CD4-positive, alpha-beta T cell (primary cell): ENCODE measurements at regions of chr12 and their contacts with region 1.

Region 1: DNA sequence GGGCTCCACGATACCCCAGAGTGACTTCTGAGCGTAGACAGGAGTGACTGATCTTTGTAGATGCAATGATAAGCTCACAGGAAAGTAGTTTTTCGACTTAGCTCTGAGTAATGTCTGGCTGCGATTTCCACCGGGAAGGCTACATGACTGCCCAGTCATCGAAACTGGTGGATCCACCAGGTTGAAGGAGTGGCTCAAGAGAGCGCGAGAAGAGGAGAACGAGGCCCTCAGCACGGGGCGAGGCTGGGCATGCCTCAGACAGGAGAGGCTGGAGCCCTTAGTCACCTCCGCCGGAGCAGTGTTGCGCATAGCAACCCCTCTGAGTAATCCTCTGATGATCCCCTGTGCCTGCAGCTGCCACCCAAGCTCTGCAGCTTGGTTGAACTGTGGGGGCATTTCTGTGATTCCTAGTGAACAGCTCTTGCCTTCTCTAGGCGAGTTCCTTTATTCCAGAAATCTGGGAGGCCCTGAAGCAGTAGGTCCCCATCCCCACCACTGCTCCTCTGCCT is 25.6 kb downstream of the ELK3 start:
- DNase-seq: peak in 2 of 14 experiments; percentile 24 to 45
- ATAC-seq: no peak
- H3K4me3 ChIP-seq: no peak overlapping the region
- H3K4me3 Mint-ChIP-seq: no peak overlapping the region
- H3K27ac ChIP-seq: no peak overlapping the region
- H3K27ac Mint-ChIP-seq: peak overlapping the region; percentile 33
- H3K4me1 ChIP-seq: peaks cover 32% of the 10 kb centered on the region
- H3K4me1 Mint-ChIP-seq: peaks cover 52% of the 10 kb centered on the region
- H3K27me3 ChIP-seq: no peaks in the 10 kb centered on the region
- H3K27me3 Mint-ChIP-seq: no peaks in the 10 kb centered on the region
- CTCF ChIP-seq: no peak

Region 2: GRCh38 chr12:95918194-95918993 is 301.4 kb before region 1 on chr12:
- CTCF ChIA-PET with region 1: interaction called, 6 read pairs
- POLR2A ChIA-PET with region 1: no interaction called
- intact Hi-C with region 1: loop called in 1 of 2 experiments (anchors 10 kb)
- DNase-seq: peak in 13 of 14 experiments; percentile 5 to 79 (median 22)
- ATAC-seq: peak; percentile 97
- H3K4me3 ChIP-seq: no peak overlapping the region
- H3K4me3 Mint-ChIP-seq: no peak overlapping the region
- H3K27ac ChIP-seq: no peak overlapping the region
- H3K27ac Mint-ChIP-seq: no peak overlapping the region
- H3K4me1 ChIP-seq: no peaks in the 10 kb centered on the region
- H3K4me1 Mint-ChIP-seq: no peaks in the 10 kb centered on the region
- H3K27me3 ChIP-seq: no peaks in the 10 kb centered on the region
- H3K27me3 Mint-ChIP-seq: peaks cover under 1% of the 10 kb centered on the region
- CTCF ChIP-seq: peak; percentile 86

Region 3: DNA sequence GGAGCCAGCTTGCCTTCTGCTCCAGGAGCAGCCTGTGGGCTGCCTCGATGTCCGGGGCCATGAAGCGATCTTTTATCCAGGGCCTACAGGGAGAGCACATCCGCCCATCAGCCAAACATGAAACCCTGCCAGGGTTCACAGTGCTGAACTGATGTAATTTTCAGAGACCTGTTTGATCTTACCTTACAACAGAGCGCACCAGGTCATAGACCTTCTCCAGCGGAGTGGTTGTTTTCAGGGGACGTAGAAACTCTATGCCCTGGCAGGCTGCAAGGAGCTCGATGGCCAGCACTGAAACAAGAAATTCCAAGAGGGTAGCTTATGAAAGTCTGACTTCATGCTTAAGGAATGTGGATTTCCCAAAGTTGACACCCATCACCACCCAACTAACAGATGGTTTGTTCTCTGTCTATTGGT is 243.3 kb before region 1 on chr12:
- CTCF ChIA-PET with region 1: no interaction called
- POLR2A ChIA-PET with region 1: no interaction called
- intact Hi-C with region 1: no loop called
- DNase-seq: no peak
- ATAC-seq: no peak
- H3K4me3 ChIP-seq: no peak overlapping the region
- H3K4me3 Mint-ChIP-seq: no peak overlapping the region
- H3K27ac ChIP-seq: no peak overlapping the region
- H3K27ac Mint-ChIP-seq: no peak overlapping the region
- H3K4me1 ChIP-seq: no peaks in the 10 kb centered on the region
- H3K4me1 Mint-ChIP-seq: no peaks in the 10 kb centered on the region
- H3K27me3 ChIP-seq: no peaks in the 10 kb centered on the region
- H3K27me3 Mint-ChIP-seq: no peaks in the 10 kb centered on the region
- CTCF ChIP-seq: no peak

Region 4: GRCh38 chr12:96026331-96026730 is 193.4 kb before region 1 on chr12:
- CTCF ChIA-PET with region 1: no interaction called
- POLR2A ChIA-PET with region 1: no interaction called
- intact Hi-C with region 1: no loop called
- DNase-seq: no peak
- ATAC-seq: no peak
- H3K4me3 ChIP-seq: no peak overlapping the region
- H3K4me3 Mint-ChIP-seq: no peak overlapping the region
- H3K27ac ChIP-seq: no peak overlapping the region
- H3K27ac Mint-ChIP-seq: no peak overlapping the region
- H3K4me1 ChIP-seq: no peaks in the 10 kb centered on the region
- H3K4me1 Mint-ChIP-seq: peaks cover 13% of the 10 kb centered on the region
- H3K27me3 ChIP-seq: no peaks in the 10 kb centered on the region
- H3K27me3 Mint-ChIP-seq: no peaks in the 10 kb centered on the region
- CTCF ChIP-seq: no peak

Region 5: GRCh38 chr12:96132819-96133218 is 86.9 kb before region 1 on chr12:
- CTCF ChIA-PET with region 1: interaction called, 6 read pairs
- POLR2A ChIA-PET with region 1: no interaction called
- intact Hi-C with region 1: loop called in 1 of 2 experiments (anchors 2 kb)
- DNase-seq: peak in 7 of 14 experiments; percentile 4 to 48 (median 33)
- ATAC-seq: no peak
- H3K4me3 ChIP-seq: no peak overlapping the region
- H3K4me3 Mint-ChIP-seq: no peak overlapping the region
- H3K27ac ChIP-seq: no peak overlapping the region
- H3K27ac Mint-ChIP-seq: no peak overlapping the region
- H3K4me1 ChIP-seq: peaks cover 9% of the 10 kb centered on the region
- H3K4me1 Mint-ChIP-seq: peaks cover 13% of the 10 kb centered on the region
- H3K27me3 ChIP-seq: no peaks in the 10 kb centered on the region
- H3K27me3 Mint-ChIP-seq: peaks cover 5% of the 10 kb centered on the region
- CTCF ChIP-seq: peak; percentile 14

Region 6: DNA sequence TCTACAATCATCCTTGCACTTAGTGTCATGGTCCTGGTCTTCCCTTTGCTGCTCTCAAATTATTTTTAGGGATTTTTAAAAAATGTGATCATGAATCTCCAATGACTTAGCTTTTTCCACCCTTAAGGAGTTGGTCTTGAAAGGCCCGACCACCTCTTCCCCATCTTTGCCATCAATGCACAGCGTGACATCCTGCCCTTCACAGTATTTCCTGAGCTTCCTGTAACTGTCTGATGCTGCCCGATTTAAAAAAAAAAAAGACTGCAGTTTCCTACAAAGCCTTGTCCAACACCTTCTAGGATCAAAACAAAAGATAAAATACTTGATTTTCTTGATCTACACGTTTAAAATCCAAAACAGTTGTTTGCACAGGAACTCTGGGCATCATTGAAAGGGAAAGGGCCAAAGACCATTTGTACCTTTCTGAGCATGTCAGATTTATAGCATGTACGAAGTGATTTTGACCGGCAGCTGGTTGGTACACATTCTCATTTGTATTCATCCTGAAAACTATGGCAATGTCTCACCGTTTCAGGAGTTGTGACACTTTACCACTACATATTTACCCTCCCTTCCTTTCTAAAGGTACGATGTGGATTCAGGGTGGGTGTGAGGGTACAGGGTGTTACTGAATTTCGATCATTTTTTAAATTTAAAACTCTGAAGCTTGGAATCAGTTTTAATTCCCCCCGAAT is 33.0 kb before region 1 on chr12:
- CTCF ChIA-PET with region 1: interaction called, 16 read pairs
- POLR2A ChIA-PET with region 1: interaction called, 3 read pairs
- intact Hi-C with region 1: no loop called
- DNase-seq: peak in 1 of 14 experiments; percentile 23
- ATAC-seq: no peak
- H3K4me3 ChIP-seq: no peak overlapping the region
- H3K4me3 Mint-ChIP-seq: no peak overlapping the region
- H3K27ac ChIP-seq: no peak overlapping the region
- H3K27ac Mint-ChIP-seq: no peak overlapping the region
- H3K4me1 ChIP-seq: peaks cover 5% of the 10 kb centered on the region
- H3K4me1 Mint-ChIP-seq: peaks cover 24% of the 10 kb centered on the region
- H3K27me3 ChIP-seq: no peaks in the 10 kb centered on the region
- H3K27me3 Mint-ChIP-seq: no peaks in the 10 kb centered on the region
- CTCF ChIP-seq: no peak

Region 7: GRCh38 chr12:96237465-96238077 is 17.8 kb after region 1 on chr12:
- CTCF ChIA-PET with region 1: interaction called, 12 read pairs
- POLR2A ChIA-PET with region 1: no interaction called
- intact Hi-C with region 1: no loop called
- DNase-seq: peak in 12 of 14 experiments; percentile 23 to 83 (median 43)
- ATAC-seq: peak; percentile 9
- H3K4me3 ChIP-seq: peak overlapping the region; percentile 4
- H3K4me3 Mint-ChIP-seq: peak overlapping the region; percentile 28
- H3K27ac ChIP-seq: peak overlapping the region; percentile 32 to 68
- H3K27ac Mint-ChIP-seq: peak overlapping the region; percentile 97
- H3K4me1 ChIP-seq: peaks cover 86% of the 10 kb centered on the region
- H3K4me1 Mint-ChIP-seq: peaks cover 79% of the 10 kb centered on the region
- H3K27me3 ChIP-seq: no peaks in the 10 kb centered on the region
- H3K27me3 Mint-ChIP-seq: no peaks in the 10 kb centered on the region
- CTCF ChIP-seq: no peak